AG04450 (cell line): ENCODE measurements at regions of chr12 and their contacts with region 1.

Region 1: GRCh38 chr12:2890388-2891239 is at the start of gene TULP3:
- DNase-seq: peak; percentile 93
- H3K4me3 ChIP-seq: peak within 1 kb of the TSS; percentile 97
- H3K27ac ChIP-seq: peak within 1 kb of the TSS; percentile 90
- H3K27me3 ChIP-seq: no peaks in the 10 kb centered on the region
- CTCF ChIP-seq: 0 out of 2 replicates have a peak, but pooled peaks have one; percentile 18
- polyA plus RNA-seq, gene TULP3: 41.6 and 48.7 TPM in 2 replicates

Region 2: GRCh38 chr12:2794736-2795289 is 95.8 kb before region 1 on chr12 and contains the start of gene FKBP4:
- CTCF ChIA-PET with region 1: no interaction called
- POLR2A ChIA-PET with region 1: no interaction called
- DNase-seq: no peak
- H3K4me3 ChIP-seq: peak within 1 kb of the TSS; percentile 92
- H3K27ac ChIP-seq: no peak within 1 kb of the TSS
- H3K27me3 ChIP-seq: peaks cover 13% of the 10 kb centered on the region
- CTCF ChIP-seq: no peak
- polyA plus RNA-seq, gene FKBP4: 30.0 and 34.1 TPM in 2 replicates

Region 3: GRCh38 chr12:2877047-2877952 is 13.3 kb before region 1 on chr12 and contains the starts of genes FOXM1 and RHNO1:
- CTCF ChIA-PET with region 1: interaction called, 4 read pairs
- POLR2A ChIA-PET with region 1: interaction called, 15 read pairs
- DNase-seq: peak; percentile 66
- H3K4me3 ChIP-seq: peak within 1 kb of the TSS; percentile 82
- H3K27ac ChIP-seq: peak within 1 kb of the TSS; percentile 84
- H3K27me3 ChIP-seq: no peaks in the 10 kb centered on the region
- CTCF ChIP-seq: 0 out of 2 replicates have a peak, but pooled peaks have one; percentile 11
- polyA plus RNA-seq, gene FOXM1: 10.8 and 11.5 TPM in 2 replicates
- polyA plus RNA-seq, gene RHNO1: 42.0 and 43.4 TPM in 2 replicates

Region 4: GRCh38 chr12:4402996-4403395 is 1512.4 kb after region 1 on chr12:
- CTCF ChIA-PET with region 1: no interaction called
- POLR2A ChIA-PET with region 1: no interaction called
- DNase-seq: no peak
- H3K4me3 ChIP-seq: no peak overlapping the region
- H3K27ac ChIP-seq: no peak overlapping the region
- H3K27me3 ChIP-seq: no peaks in the 10 kb centered on the region
- CTCF ChIP-seq: no peak